Caco-2 (cell line): ENCODE measurements at regions of chr15 and their contacts with region 1.

Region 1: GRCh38 chr15:72671535-72671934 is 14.4 kb downstream of the HIGD2B start:
- DNase-seq: no peak
- H3K4me3 ChIP-seq: no peak overlapping the region
- H3K4me3 Mint-ChIP-seq: no peak overlapping the region
- H3K27ac Mint-ChIP-seq: no peak overlapping the region
- H3K4me1 ChIP-seq: no peaks in the 10 kb centered on the region
- H3K4me1 Mint-ChIP-seq: no peaks in the 10 kb centered on the region
- H3K27me3 ChIP-seq: no peaks in the 10 kb centered on the region
- H3K27me3 Mint-ChIP-seq: no peaks in the 10 kb centered on the region
- CTCF ChIP-seq: no peak

Region 2: DNA sequence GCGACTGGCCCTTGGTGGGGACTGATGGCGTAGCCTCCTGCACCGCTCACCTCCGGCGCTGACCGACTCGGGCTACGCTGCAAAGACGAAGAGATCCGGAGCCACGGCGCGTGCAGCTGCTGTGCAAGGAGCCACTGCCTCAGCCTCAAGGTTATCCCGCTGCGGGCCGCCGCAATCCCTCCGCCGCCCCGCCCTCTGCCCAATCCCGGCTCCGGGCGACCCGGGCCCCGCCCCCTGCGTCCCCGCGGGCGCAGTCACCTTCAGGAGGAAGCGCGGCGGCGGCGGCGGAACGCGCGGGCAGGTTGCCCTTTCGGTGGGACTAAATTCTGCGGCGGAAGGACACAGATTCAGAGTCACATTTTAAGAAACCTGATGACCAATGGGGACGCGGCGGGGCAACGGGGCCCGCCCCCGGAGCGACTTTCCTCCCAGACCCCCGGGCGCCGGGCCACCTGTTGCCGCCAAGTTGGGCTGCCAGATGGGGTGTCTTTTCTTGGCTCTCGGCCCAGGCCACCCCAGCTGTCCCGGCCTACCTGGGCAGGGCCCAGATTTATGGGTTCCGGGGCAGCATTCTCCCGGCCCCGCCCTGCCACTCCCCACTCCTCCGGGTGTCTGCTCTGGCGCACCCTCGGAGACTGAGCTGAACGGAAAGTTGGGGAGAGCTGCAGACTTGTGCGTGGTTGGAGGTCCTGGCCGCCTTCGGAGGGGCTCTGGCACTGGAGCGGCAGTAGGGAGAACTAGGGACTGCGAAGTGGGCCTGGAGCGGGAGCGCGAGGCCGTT is 440.3 kb before region 1 on chr15 and contains the start of gene PKM:
- CTCF ChIA-PET with region 1: no interaction called
- POLR2A ChIA-PET with region 1: no interaction called
- intact Hi-C with region 1: no loop called
- DNase-seq: peak; percentile 99
- H3K4me3 ChIP-seq: peak within 1 kb of the TSS; percentile 83
- H3K4me3 Mint-ChIP-seq: peak within 1 kb of the TSS; percentile 97
- H3K27ac Mint-ChIP-seq: peak within 1 kb of the TSS; percentile 95
- H3K4me1 ChIP-seq: peaks cover 30% of the 10 kb centered on the region
- H3K4me1 Mint-ChIP-seq: no peaks in the 10 kb centered on the region
- H3K27me3 ChIP-seq: no peaks in the 10 kb centered on the region
- H3K27me3 Mint-ChIP-seq: no peaks in the 10 kb centered on the region
- CTCF ChIP-seq: no peak
- total RNA-seq, gene PKM: 733 and 791 TPM in 2 replicates

Region 3: GRCh38 chr15:72312605-72313447 is 358.7 kb before region 1 on chr15:
- CTCF ChIA-PET with region 1: interaction called, 3 read pairs
- POLR2A ChIA-PET with region 1: no interaction called
- intact Hi-C with region 1: loop called (anchors 10 kb)
- DNase-seq: peak; percentile 67 to 73
- H3K4me3 ChIP-seq: no peak overlapping the region
- H3K4me3 Mint-ChIP-seq: no peak overlapping the region
- H3K27ac Mint-ChIP-seq: no peak overlapping the region
- H3K4me1 ChIP-seq: no peaks in the 10 kb centered on the region
- H3K4me1 Mint-ChIP-seq: no peaks in the 10 kb centered on the region
- H3K27me3 ChIP-seq: no peaks in the 10 kb centered on the region
- H3K27me3 Mint-ChIP-seq: peaks cover 21% of the 10 kb centered on the region
- CTCF ChIP-seq: peak; percentile 65 to 73

Region 4: DNA sequence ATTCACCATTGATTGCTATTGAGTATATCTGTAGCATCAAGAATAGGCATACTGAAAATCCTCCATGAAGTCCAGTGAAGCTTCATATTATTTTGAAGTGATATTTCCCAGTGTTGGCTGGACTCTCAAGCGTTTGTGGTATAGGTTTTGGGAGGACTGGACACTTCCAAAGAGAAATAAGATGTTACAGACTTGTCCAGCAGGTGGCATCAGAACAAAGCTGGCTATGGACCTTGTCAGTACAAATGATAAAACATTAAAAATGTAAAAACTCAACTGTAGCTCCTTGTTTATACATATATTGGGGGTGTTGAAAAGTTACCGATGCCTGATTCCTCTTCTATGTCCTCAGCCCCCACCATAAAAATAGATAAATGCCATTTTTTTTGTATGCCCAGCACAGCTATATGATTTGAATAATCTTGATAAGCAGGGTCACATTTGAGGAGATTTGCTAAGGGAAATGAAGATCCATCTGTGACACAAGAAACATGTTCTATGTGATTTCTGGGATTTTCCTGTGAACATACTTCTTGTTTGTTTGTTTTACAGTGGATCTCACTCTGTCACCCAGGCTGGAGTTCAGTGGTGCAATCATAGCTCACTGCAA is 71.6 kb before region 1 on chr15:
- CTCF ChIA-PET with region 1: interaction called, 15 read pairs
- POLR2A ChIA-PET with region 1: no interaction called
- intact Hi-C with region 1: loop called (anchors 10 kb)
- DNase-seq: peak in 1 of 2 experiments; percentile 56
- H3K4me3 ChIP-seq: no peak overlapping the region
- H3K4me3 Mint-ChIP-seq: no peak overlapping the region
- H3K27ac Mint-ChIP-seq: no peak overlapping the region
- H3K4me1 ChIP-seq: no peaks in the 10 kb centered on the region
- H3K4me1 Mint-ChIP-seq: no peaks in the 10 kb centered on the region
- H3K27me3 ChIP-seq: no peaks in the 10 kb centered on the region
- H3K27me3 Mint-ChIP-seq: no peaks in the 10 kb centered on the region
- CTCF ChIP-seq: peak; percentile 52 to 55